ENCODE measurements at regions of chr3 and their contacts with region 1.

Region 1: GRCh38 chr3:16264708-16265454 is at the starts of genes DPH3 and OXNAD1:
- DNase-seq: peak; percentile 95 to 100 (median 98)
- ATAC-seq: peak; percentile 89
- H3K4me3 ChIP-seq: peak within 1 kb of the TSS; percentile 78
- H3K4me3 Mint-ChIP-seq: peak within 1 kb of the TSS; percentile 100
- H3K27ac ChIP-seq: peak within 1 kb of the TSS; percentile 91 to 94
- H3K27ac Mint-ChIP-seq: peak within 1 kb of the TSS; percentile 97
- H3K4me1 ChIP-seq: peaks cover 20% of the 10 kb centered on the region
- H3K4me1 Mint-ChIP-seq: peaks cover 48% of the 10 kb centered on the region
- H3K27me3 ChIP-seq: no peaks in the 10 kb centered on the region
- H3K27me3 Mint-ChIP-seq: no peaks in the 10 kb centered on the region
- CTCF ChIP-seq: no peak
- total RNA-seq, gene DPH3: 10.5 to 12.8 TPM
- total RNA-seq, gene OXNAD1: 135 TPM

Region 2: GRCh38 chr3:15601397-15602145 is 663.3 kb before region 1 on chr3 and contains the starts of genes BTD and HACL1:
- CTCF ChIA-PET with region 1: no interaction called
- POLR2A ChIA-PET with region 1: no interaction called
- intact Hi-C with region 1: loop called in 1 of 2 experiments (anchors 10 kb)
- DNase-seq: peak; percentile 97 to 100 (median 98)
- ATAC-seq: peak; percentile 90
- H3K4me3 ChIP-seq: peak within 1 kb of the TSS; percentile 83
- H3K4me3 Mint-ChIP-seq: peak within 1 kb of the TSS; percentile 95
- H3K27ac ChIP-seq: peak within 1 kb of the TSS; percentile 75 to 81
- H3K27ac Mint-ChIP-seq: peak within 1 kb of the TSS; percentile 91
- H3K4me1 ChIP-seq: peaks cover 28% of the 10 kb centered on the region
- H3K4me1 Mint-ChIP-seq: peaks cover 65% of the 10 kb centered on the region
- H3K27me3 ChIP-seq: no peaks in the 10 kb centered on the region
- H3K27me3 Mint-ChIP-seq: no peaks in the 10 kb centered on the region
- CTCF ChIP-seq: peak; percentile 21
- total RNA-seq, gene BTD: 11.2 to 12.5 TPM
- total RNA-seq, gene HACL1: 26.6 to 33.2 TPM

Region 3: GRCh38 chr3:15708882-15709677 is 555.8 kb before region 1 on chr3:
- CTCF ChIA-PET with region 1: no interaction called
- POLR2A ChIA-PET with region 1: no interaction called
- intact Hi-C with region 1: no loop called
- DNase-seq: no peak
- ATAC-seq: no peak
- H3K4me3 ChIP-seq: no peak overlapping the region
- H3K4me3 Mint-ChIP-seq: no peak overlapping the region
- H3K27ac ChIP-seq: no peak overlapping the region
- H3K27ac Mint-ChIP-seq: no peak overlapping the region
- H3K4me1 ChIP-seq: no peaks in the 10 kb centered on the region
- H3K4me1 Mint-ChIP-seq: no peaks in the 10 kb centered on the region
- H3K27me3 ChIP-seq: no peaks in the 10 kb centered on the region
- H3K27me3 Mint-ChIP-seq: no peaks in the 10 kb centered on the region
- CTCF ChIP-seq: no peak

Region 4: DNA sequence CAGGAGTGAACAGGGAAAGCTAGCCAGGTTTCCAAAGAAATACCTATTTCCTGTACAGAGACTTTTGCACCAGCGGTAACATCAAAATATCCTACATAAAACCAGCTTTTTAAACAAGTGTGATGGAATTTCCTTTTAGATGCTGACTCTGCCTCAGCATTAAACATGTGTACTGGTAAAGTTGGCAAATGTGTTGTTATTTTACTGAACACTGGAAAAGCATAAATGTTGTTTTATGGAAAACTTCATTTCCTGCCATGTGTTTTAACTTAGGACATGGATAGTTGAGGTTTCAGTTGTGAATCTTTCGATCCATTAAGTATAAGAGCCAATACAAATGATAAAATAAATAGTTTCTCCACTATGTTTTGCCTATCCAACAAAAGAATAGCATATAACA is 15.8 kb after region 1 on chr3:
- CTCF ChIA-PET with region 1: interaction called, 16 read pairs
- POLR2A ChIA-PET with region 1: interaction called, 49 read pairs
- intact Hi-C with region 1: loop called in 1 of 2 experiments (anchors 1 kb)
- DNase-seq: no peak
- ATAC-seq: no peak
- H3K4me3 ChIP-seq: no peak overlapping the region
- H3K4me3 Mint-ChIP-seq: no peak overlapping the region
- H3K27ac ChIP-seq: no peak overlapping the region
- H3K27ac Mint-ChIP-seq: no peak overlapping the region
- H3K4me1 ChIP-seq: peaks cover 11% of the 10 kb centered on the region
- H3K4me1 Mint-ChIP-seq: peaks cover 30% of the 10 kb centered on the region
- H3K27me3 ChIP-seq: no peaks in the 10 kb centered on the region
- H3K27me3 Mint-ChIP-seq: no peaks in the 10 kb centered on the region
- CTCF ChIP-seq: no peak

Region 5: GRCh38 chr3:16300881-16301359 is 36.0 kb after region 1 on chr3:
- CTCF ChIA-PET with region 1: interaction called, 4 read pairs
- POLR2A ChIA-PET with region 1: interaction called, 14 read pairs
- intact Hi-C with region 1: no loop called
- DNase-seq: peak; percentile 43 to 90 (median 52)
- ATAC-seq: peak; percentile 73
- H3K4me3 ChIP-seq: peak overlapping the region; percentile 33
- H3K4me3 Mint-ChIP-seq: peak overlapping the region; percentile 91
- H3K27ac ChIP-seq: peak overlapping the region; percentile 63 to 81
- H3K27ac Mint-ChIP-seq: peak overlapping the region; percentile 96
- H3K4me1 ChIP-seq: peaks cover 71% of the 10 kb centered on the region
- H3K4me1 Mint-ChIP-seq: peaks cover 97% of the 10 kb centered on the region
- H3K27me3 ChIP-seq: no peaks in the 10 kb centered on the region
- H3K27me3 Mint-ChIP-seq: no peaks in the 10 kb centered on the region
- CTCF ChIP-seq: no peak

Region 6: GRCh38 chr3:16319307-16319706 is 54.4 kb after region 1 on chr3:
- CTCF ChIA-PET with region 1: interaction called, 14 read pairs
- POLR2A ChIA-PET with region 1: interaction called, 9 read pairs
- intact Hi-C with region 1: loop called (anchors 1 to 10 kb)
- DNase-seq: peak; percentile 65 to 91 (median 75)
- ATAC-seq: peak; percentile 85
- H3K4me3 ChIP-seq: no peak overlapping the region
- H3K4me3 Mint-ChIP-seq: peak overlapping the region; percentile 23
- H3K27ac ChIP-seq: peak overlapping the region; percentile 42 to 48
- H3K27ac Mint-ChIP-seq: peak overlapping the region; percentile 94
- H3K4me1 ChIP-seq: peaks cover 68% of the 10 kb centered on the region
- H3K4me1 Mint-ChIP-seq: peaks cover 72% of the 10 kb centered on the region
- H3K27me3 ChIP-seq: no peaks in the 10 kb centered on the region
- H3K27me3 Mint-ChIP-seq: no peaks in the 10 kb centered on the region
- CTCF ChIP-seq: peak; percentile 72

Region 7: DNA sequence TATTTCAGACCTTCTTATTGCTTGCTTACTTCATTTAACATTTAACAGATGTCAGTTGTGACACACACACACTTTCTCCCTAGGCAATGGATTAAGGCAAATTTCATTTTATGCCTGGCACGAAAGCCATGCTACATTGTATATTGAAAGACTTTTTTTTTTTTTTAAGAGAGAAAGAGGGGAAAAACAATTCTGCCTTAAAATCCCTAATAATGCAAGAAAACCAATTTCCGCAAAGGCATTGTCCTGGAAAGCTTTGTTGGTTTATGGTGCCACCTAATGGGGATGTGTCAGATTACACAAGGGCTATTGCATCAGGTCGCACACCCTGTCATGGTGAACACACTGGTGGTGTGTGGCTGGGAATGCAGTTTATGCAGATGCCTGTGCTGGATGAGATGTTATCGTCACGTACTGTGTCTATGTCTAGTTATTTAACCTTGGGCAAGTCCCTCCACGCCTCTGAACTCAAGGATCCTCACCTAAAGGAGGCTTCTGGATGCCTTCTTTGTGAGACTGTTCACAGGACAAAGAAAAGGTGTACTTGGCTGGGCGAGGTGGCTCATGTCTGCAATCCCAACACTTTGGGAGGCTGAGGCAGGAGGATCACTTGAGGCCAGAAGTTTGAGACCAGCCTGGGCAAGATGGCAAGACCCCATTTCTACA is 285.9 kb after region 1 on chr3:
- CTCF ChIA-PET with region 1: interaction called, 21 read pairs
- POLR2A ChIA-PET with region 1: no interaction called
- intact Hi-C with region 1: loop called (anchors 1 kb)
- DNase-seq: peak; percentile 43 to 90 (median 62)
- ATAC-seq: peak; percentile 100
- H3K4me3 ChIP-seq: no peak overlapping the region
- H3K4me3 Mint-ChIP-seq: no peak overlapping the region
- H3K27ac ChIP-seq: no peak overlapping the region
- H3K27ac Mint-ChIP-seq: peak overlapping the region; percentile 16
- H3K4me1 ChIP-seq: peaks cover 5% of the 10 kb centered on the region
- H3K4me1 Mint-ChIP-seq: no peaks in the 10 kb centered on the region
- H3K27me3 ChIP-seq: no peaks in the 10 kb centered on the region
- H3K27me3 Mint-ChIP-seq: peaks cover 4% of the 10 kb centered on the region
- CTCF ChIP-seq: peak; percentile 91

Region 8: GRCh38 chr3:17233398-17233800 is 968.5 kb after region 1 on chr3:
- CTCF ChIA-PET with region 1: no interaction called
- POLR2A ChIA-PET with region 1: no interaction called
- intact Hi-C with region 1: loop called in 1 of 2 experiments (anchors 5 kb)
- DNase-seq: peak in 10 of 14 experiments; percentile 1 to 79 (median 24)
- ATAC-seq: peak; percentile 100
- H3K4me3 ChIP-seq: no peak overlapping the region
- H3K4me3 Mint-ChIP-seq: peak overlapping the region; percentile 2
- H3K27ac ChIP-seq: no peak overlapping the region
- H3K27ac Mint-ChIP-seq: peak overlapping the region; percentile 25
- H3K4me1 ChIP-seq: no peaks in the 10 kb centered on the region
- H3K4me1 Mint-ChIP-seq: peaks cover 30% of the 10 kb centered on the region
- H3K27me3 ChIP-seq: no peaks in the 10 kb centered on the region
- H3K27me3 Mint-ChIP-seq: no peaks in the 10 kb centered on the region
- CTCF ChIP-seq: peak; percentile 82

Measured in CD4-positive, alpha-beta T cell (primary cell).